GM12878 (cell line): ENCODE measurements at regions of chr2 and their contacts with region 1.

Region 1: GRCh38 chr2:218216674-218217359 is at the start of gene ARPC2:
- DNase-seq: peak; percentile 75
- ATAC-seq: peak; percentile 78
- H3K4me3 ChIP-seq: peak within 1 kb of the TSS; percentile 93
- H3K27ac ChIP-seq: peak within 1 kb of the TSS; percentile 99
- H3K4me1 ChIP-seq: peaks cover 12% of the 10 kb centered on the region
- H3K27me3 ChIP-seq: no peaks in the 10 kb centered on the region
- CTCF ChIP-seq: no peak
- EP300 ChIP-seq: peak in 1 of 2 experiments; percentile 65; a peak in 3 of 4 replicates
- POLR2A ChIP-seq: peak; percentile 81
- RAD21 ChIP-seq: no peak
- polyA plus RNA-seq, gene ARPC2: 711 to 735 TPM

Region 2: GRCh38 chr2:217922101-217923006 is 294.5 kb before region 1 on chr2:
- CTCF ChIA-PET with region 1: no interaction called
- POLR2A ChIA-PET with region 1: no interaction called
- RAD21 ChIA-PET with region 1: no interaction called
- SMC1A ChIA-PET with region 1: no interaction called
- in situ Hi-C with region 1: no loop called
- intact Hi-C with region 1: no loop called
- DNase-seq: no peak
- ATAC-seq: no peak
- H3K4me3 ChIP-seq: no peak overlapping the region
- H3K27ac ChIP-seq: no peak overlapping the region
- H3K4me1 ChIP-seq: no peaks in the 10 kb centered on the region
- H3K27me3 ChIP-seq: peaks cover 0 to 6% of the 10 kb centered on the region in 2 experiments; a peak in 2 of 4 replicates
- CTCF ChIP-seq: no peak
- EP300 ChIP-seq: no peak
- POLR2A ChIP-seq: no peak
- RAD21 ChIP-seq: no peak

Region 3: GRCh38 chr2:218229239-218229638 is 12.4 kb after region 1 on chr2:
- CTCF ChIA-PET with region 1: interaction called, 58 read pairs
- POLR2A ChIA-PET with region 1: interaction called, 98 read pairs
- RAD21 ChIA-PET with region 1: interaction called, 84 read pairs
- SMC1A ChIA-PET with region 1: interaction called, 73 read pairs
- in situ Hi-C with region 1: no loop called
- intact Hi-C with region 1: loop called (anchors 1 kb)
- DNase-seq: peak; percentile 88
- ATAC-seq: peak; percentile 93
- H3K4me3 ChIP-seq: peak overlapping the region; percentile 21
- H3K27ac ChIP-seq: peak overlapping the region; percentile 82
- H3K4me1 ChIP-seq: peaks cover 26% of the 10 kb centered on the region
- H3K27me3 ChIP-seq: no peaks in the 10 kb centered on the region
- CTCF ChIP-seq: no peak
- EP300 ChIP-seq: no peak
- POLR2A ChIP-seq: no peak
- RAD21 ChIP-seq: no peak

Region 4: GRCh38 chr2:218292048-218293014 is 75.5 kb after region 1 on chr2 and contains the start of gene TMBIM1:
- CTCF ChIA-PET with region 1: no interaction called
- POLR2A ChIA-PET with region 1: interaction called, 10 read pairs
- RAD21 ChIA-PET with region 1: interaction called, 6 read pairs
- SMC1A ChIA-PET with region 1: no interaction called
- in situ Hi-C with region 1: no loop called
- intact Hi-C with region 1: no loop called
- DNase-seq: no peak
- ATAC-seq: peak; percentile 87
- H3K4me3 ChIP-seq: peak within 1 kb of the TSS; percentile 85
- H3K27ac ChIP-seq: peak within 1 kb of the TSS; percentile 72
- H3K4me1 ChIP-seq: peaks cover 28% of the 10 kb centered on the region
- H3K27me3 ChIP-seq: no peaks in the 10 kb centered on the region
- CTCF ChIP-seq: peak; percentile 68 to 92 (median 85)
- EP300 ChIP-seq: no peak
- POLR2A ChIP-seq: peak; percentile 58
- RAD21 ChIP-seq: peak; percentile 51
- polyA plus RNA-seq, gene TMBIM1: 6.1 to 11.7 TPM